Natural killer cell (primary cell): ENCODE measurements at regions of chr14 and their contacts with region 1.

Region 1: GRCh38 chr14:75230140-75231045 is 48.2 kb upstream of the FOS start:
- DNase-seq: peak; percentile 61 to 87
- ATAC-seq: peak; percentile 70 to 85 (median 75)
- H3K4me3 ChIP-seq: no peak overlapping the region
- H3K4me3 Mint-ChIP-seq: peak overlapping the region; percentile 63
- H3K27ac ChIP-seq: peak overlapping the region; percentile 30
- H3K27ac Mint-ChIP-seq: peak overlapping the region; percentile 82 to 85
- H3K4me1 ChIP-seq: peaks cover 66% of the 10 kb centered on the region
- H3K4me1 Mint-ChIP-seq: peaks cover 48 to 79% of the 10 kb centered on the region in 2 donors
- H3K27me3 ChIP-seq: no peaks in the 10 kb centered on the region
- H3K27me3 Mint-ChIP-seq: no peaks in the 10 kb centered on the region
- CTCF ChIP-seq: peak; percentile 18

Region 2: GRCh38 chr14:75132382-75133086 is 97.9 kb before region 1 on chr14:
- intact Hi-C with region 1: loop called (anchors 2 kb)
- DNase-seq: peak in 1 of 2 donors; percentile 89
- ATAC-seq: peak; percentile 83 to 93 (median 92)
- H3K4me3 ChIP-seq: no peak overlapping the region
- H3K4me3 Mint-ChIP-seq: no peak overlapping the region
- H3K27ac ChIP-seq: no peak overlapping the region
- H3K27ac Mint-ChIP-seq: peak overlapping the region; percentile 58 to 77
- H3K4me1 ChIP-seq: peaks cover 6% of the 10 kb centered on the region
- H3K4me1 Mint-ChIP-seq: peaks cover 17 to 22% of the 10 kb centered on the region in 2 donors
- H3K27me3 ChIP-seq: no peaks in the 10 kb centered on the region
- H3K27me3 Mint-ChIP-seq: no peaks in the 10 kb centered on the region
- CTCF ChIP-seq: peak; percentile 77

Region 3: GRCh38 chr14:75165586-75166391 is 64.6 kb before region 1 on chr14:
- intact Hi-C with region 1: no loop called
- DNase-seq: no peak
- ATAC-seq: no peak
- H3K4me3 ChIP-seq: no peak overlapping the region
- H3K4me3 Mint-ChIP-seq: no peak overlapping the region
- H3K27ac ChIP-seq: no peak overlapping the region
- H3K27ac Mint-ChIP-seq: no peak overlapping the region
- H3K4me1 ChIP-seq: peaks cover 15% of the 10 kb centered on the region
- H3K4me1 Mint-ChIP-seq: peaks cover 53 to 69% of the 10 kb centered on the region in 2 donors
- H3K27me3 ChIP-seq: no peaks in the 10 kb centered on the region
- H3K27me3 Mint-ChIP-seq: no peaks in the 10 kb centered on the region
- CTCF ChIP-seq: no peak

Region 4: DNA sequence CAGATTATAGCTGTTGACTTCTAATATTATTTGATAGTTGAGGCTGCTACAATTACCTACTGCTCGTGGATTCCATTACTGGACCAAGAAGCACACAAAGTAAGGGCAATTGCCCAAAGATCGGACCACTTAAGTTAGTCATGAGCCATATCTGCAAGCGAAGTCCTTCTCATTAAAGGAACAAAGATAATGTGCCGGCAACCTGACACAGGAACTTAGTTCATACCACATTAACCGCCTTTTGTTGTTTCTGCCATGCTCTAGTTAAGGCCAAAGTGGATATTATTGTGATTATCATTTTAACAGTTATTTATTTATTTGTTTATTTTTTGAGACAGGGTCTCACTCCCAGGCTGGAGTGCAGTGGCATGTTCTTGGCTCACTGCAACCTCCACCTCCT is 15.8 kb before region 1 on chr14:
- intact Hi-C with region 1: loop called (anchors 2 kb)
- DNase-seq: peak in 1 of 2 donors; percentile 34
- ATAC-seq: peak; percentile 70 to 95 (median 84)
- H3K4me3 ChIP-seq: no peak overlapping the region
- H3K4me3 Mint-ChIP-seq: peak overlapping the region; percentile 69
- H3K27ac ChIP-seq: no peak overlapping the region
- H3K27ac Mint-ChIP-seq: peak overlapping the region in 1 of 2 donors; percentile 45
- H3K4me1 ChIP-seq: peaks cover 32% of the 10 kb centered on the region
- H3K4me1 Mint-ChIP-seq: peaks cover 35 to 36% of the 10 kb centered on the region in 2 donors
- H3K27me3 ChIP-seq: no peaks in the 10 kb centered on the region
- H3K27me3 Mint-ChIP-seq: peaks cover 0 to 2% of the 10 kb centered on the region in 2 donors
- CTCF ChIP-seq: no peak

Region 5: GRCh38 chr14:75258615-75259466 is 28.4 kb after region 1 on chr14:
- intact Hi-C with region 1: loop called (anchors 1 kb)
- DNase-seq: peak; percentile 100
- ATAC-seq: peak; percentile 85 to 97 (median 90)
- H3K4me3 ChIP-seq: peak overlapping the region; percentile 46
- H3K4me3 Mint-ChIP-seq: peak overlapping the region; percentile 83
- H3K27ac ChIP-seq: peak overlapping the region; percentile 93
- H3K27ac Mint-ChIP-seq: peak overlapping the region; percentile 99
- H3K4me1 ChIP-seq: peaks cover 11% of the 10 kb centered on the region
- H3K4me1 Mint-ChIP-seq: peaks cover 23 to 34% of the 10 kb centered on the region in 2 donors
- H3K27me3 ChIP-seq: no peaks in the 10 kb centered on the region
- H3K27me3 Mint-ChIP-seq: no peaks in the 10 kb centered on the region
- CTCF ChIP-seq: no peak

Region 6: GRCh38 chr14:75293920-75294642 is 63.7 kb after region 1 on chr14:
- intact Hi-C with region 1: loop called (anchors 1 kb)
- DNase-seq: peak; percentile 95 to 99
- ATAC-seq: peak; percentile 79 to 95 (median 86)
- H3K4me3 ChIP-seq: peak overlapping the region; percentile 66
- H3K4me3 Mint-ChIP-seq: peak overlapping the region; percentile 98
- H3K27ac ChIP-seq: peak overlapping the region; percentile 94
- H3K27ac Mint-ChIP-seq: peak overlapping the region; percentile 89 to 96
- H3K4me1 ChIP-seq: peaks cover 33% of the 10 kb centered on the region
- H3K4me1 Mint-ChIP-seq: peaks cover 11 to 19% of the 10 kb centered on the region in 2 donors
- H3K27me3 ChIP-seq: no peaks in the 10 kb centered on the region
- H3K27me3 Mint-ChIP-seq: peaks cover 8 to 9% of the 10 kb centered on the region in 2 donors
- CTCF ChIP-seq: no peak